CD8-positive, alpha-beta T cell (primary cell): ENCODE measurements at regions of chr3 and their contacts with region 1.

Region 1: DNA sequence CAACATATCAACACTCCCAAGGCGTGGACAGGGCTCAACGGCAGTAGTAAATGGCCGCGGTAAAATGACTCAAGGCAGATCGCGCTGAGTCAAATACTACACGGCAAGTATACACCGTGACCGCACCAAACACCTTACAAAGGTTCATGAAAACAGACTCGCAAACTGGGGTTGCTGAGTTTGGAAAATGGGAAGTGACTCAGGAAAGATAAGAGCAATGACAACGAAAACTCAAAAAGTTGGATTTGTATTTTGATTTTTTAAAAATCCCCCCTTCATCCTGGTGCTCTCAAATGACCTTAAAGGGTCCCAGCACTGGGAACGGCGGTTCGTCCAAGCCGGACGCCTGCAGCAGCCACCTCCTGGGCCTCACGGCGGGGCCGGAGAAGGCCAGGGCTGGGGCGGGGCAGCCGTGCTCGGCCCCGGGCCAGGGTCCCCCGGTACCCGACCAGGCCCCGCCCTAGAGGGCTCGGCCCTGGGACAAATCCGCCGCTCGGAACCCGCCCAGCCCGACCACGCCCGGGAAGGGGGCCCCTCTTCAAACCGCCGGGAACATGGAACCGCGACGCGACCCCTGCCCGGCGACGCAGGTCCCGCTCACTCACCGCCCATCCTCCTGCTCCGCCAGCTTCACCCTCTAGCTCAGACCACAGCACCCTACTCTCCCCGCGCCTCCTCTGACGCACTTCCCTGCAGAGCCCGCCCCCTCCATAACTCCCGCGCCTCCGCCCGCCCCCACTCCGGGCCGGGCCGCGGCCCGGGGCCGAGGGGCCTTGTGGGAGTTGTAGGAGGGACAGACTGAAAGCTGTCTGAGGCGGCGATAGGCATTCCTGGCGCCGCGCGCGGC is at the start of gene CLDND1:
- DNase-seq: peak; percentile 90 to 97 (median 95)
- ATAC-seq: peak; percentile 96
- H3K4me3 ChIP-seq: peak within 1 kb of the TSS; percentile 66 to 71
- H3K4me3 Mint-ChIP-seq: peak within 1 kb of the TSS; percentile 95
- H3K27ac ChIP-seq: peak within 1 kb of the TSS; percentile 82 to 86
- H3K27ac Mint-ChIP-seq: peak within 1 kb of the TSS; percentile 97
- H3K4me1 ChIP-seq: peaks cover 25% of the 10 kb centered on the region
- H3K4me1 Mint-ChIP-seq: peaks cover 54% of the 10 kb centered on the region
- H3K27me3 ChIP-seq: no peaks in the 10 kb centered on the region
- H3K27me3 Mint-ChIP-seq: no peaks in the 10 kb centered on the region
- CTCF ChIP-seq: no peak
- total RNA-seq, gene CLDND1: 135 to 146 TPM

Region 2: DNA sequence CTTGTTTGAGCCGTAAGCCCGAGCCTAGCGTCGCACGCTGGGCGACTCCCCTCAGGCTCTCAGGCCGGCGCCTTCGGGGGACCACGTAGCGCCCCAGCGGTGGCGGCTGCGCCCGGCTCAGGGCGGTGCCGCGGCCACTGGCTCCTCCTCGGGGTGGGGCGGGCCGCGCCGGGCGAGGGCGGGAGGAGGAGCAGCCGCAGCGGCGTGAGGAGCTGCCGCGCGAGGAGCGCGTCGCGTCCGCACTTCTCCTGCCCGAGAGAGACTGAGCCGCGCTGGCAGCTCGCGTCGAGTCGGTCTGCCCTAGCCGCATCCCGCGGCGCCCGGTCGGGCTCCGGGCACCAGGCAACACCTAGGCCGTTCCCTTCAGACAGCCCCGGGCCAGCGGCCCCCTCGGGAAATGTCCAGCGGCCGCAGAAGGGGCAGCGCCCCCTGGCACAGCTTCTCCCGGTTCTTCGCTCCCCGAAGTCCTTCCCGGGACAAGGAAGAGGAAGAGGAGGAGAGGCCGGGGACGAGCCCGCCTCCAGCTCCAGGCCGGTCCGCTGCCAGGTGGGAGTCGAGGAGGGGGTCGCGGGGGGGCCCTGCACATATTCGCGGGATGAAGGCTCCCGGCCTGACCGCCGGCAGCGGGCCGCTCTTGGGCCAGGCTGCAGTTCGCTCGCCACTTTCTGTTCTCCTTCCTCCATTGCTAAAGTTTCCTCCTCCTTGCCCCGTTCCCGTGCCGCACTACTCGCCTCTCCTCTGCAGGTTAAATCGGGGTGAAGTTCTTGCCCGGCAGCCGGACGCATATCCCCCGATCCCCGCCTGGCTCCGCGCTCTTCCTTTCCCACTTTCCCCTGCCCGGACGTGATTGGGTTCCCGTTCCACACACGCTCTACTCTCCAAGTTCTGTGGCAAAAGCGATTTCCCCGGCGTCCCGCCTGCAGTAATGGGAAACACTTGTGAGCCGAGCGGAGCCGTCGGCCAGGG is 700.4 kb before region 1 on chr3 and contains the start of gene CRYBG3:
- CTCF ChIA-PET with region 1: no interaction called
- POLR2A ChIA-PET with region 1: no interaction called
- intact Hi-C with region 1: loop called in 1 of 2 experiments (anchors 2 kb)
- DNase-seq: peak; percentile 63 to 90 (median 78)
- ATAC-seq: peak; percentile 98
- H3K4me3 ChIP-seq: peak within 1 kb of the TSS; percentile 61 to 75
- H3K4me3 Mint-ChIP-seq: peak within 1 kb of the TSS; percentile 95
- H3K27ac ChIP-seq: peak within 1 kb of the TSS; percentile 11 to 28
- H3K27ac Mint-ChIP-seq: peak within 1 kb of the TSS; percentile 81
- H3K4me1 ChIP-seq: peaks cover 11% of the 10 kb centered on the region
- H3K4me1 Mint-ChIP-seq: peaks cover 21% of the 10 kb centered on the region
- H3K27me3 ChIP-seq: no peaks in the 10 kb centered on the region
- H3K27me3 Mint-ChIP-seq: peaks cover 13% of the 10 kb centered on the region
- CTCF ChIP-seq: no peak
- total RNA-seq, gene CRYBG3: 1.00 to 1.1 TPM

Region 3: GRCh38 chr3:98039322-98040024 is 483.0 kb before region 1 on chr3:
- CTCF ChIA-PET with region 1: no interaction called
- POLR2A ChIA-PET with region 1: no interaction called
- intact Hi-C with region 1: loop called (anchors 5 kb)
- DNase-seq: peak; percentile 27 to 89 (median 66)
- ATAC-seq: peak; percentile 96
- H3K4me3 ChIP-seq: peak overlapping the region; percentile 37 to 38
- H3K4me3 Mint-ChIP-seq: peak overlapping the region; percentile 81
- H3K27ac ChIP-seq: peak overlapping the region; percentile 33 to 57
- H3K27ac Mint-ChIP-seq: peak overlapping the region; percentile 92
- H3K4me1 ChIP-seq: no peaks in the 10 kb centered on the region
- H3K4me1 Mint-ChIP-seq: peaks cover 7% of the 10 kb centered on the region
- H3K27me3 ChIP-seq: no peaks in the 10 kb centered on the region
- H3K27me3 Mint-ChIP-seq: peaks cover 22% of the 10 kb centered on the region
- CTCF ChIP-seq: peak; percentile 100

Region 4: DNA sequence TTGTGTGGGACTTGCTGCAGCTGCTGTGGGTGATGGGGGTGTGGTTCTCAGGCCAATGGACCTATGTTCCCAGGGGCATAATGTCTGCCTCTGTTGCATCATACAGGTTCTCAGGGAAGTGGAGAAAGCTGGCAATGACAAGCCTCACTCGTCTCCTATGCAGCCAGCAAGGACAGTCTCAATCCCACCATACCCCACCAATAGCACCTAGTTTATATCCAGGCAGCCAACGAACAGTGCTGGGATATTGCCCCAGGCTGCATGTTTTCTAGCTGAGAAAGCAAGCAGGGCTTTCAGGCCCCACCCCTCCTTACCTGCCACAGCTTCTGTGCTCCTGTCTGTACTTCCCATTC is 39.4 kb before region 1 on chr3:
- CTCF ChIA-PET with region 1: no interaction called
- POLR2A ChIA-PET with region 1: no interaction called
- intact Hi-C with region 1: no loop called
- DNase-seq: no peak
- ATAC-seq: no peak
- H3K4me3 ChIP-seq: no peak overlapping the region
- H3K4me3 Mint-ChIP-seq: no peak overlapping the region
- H3K27ac ChIP-seq: no peak overlapping the region
- H3K27ac Mint-ChIP-seq: no peak overlapping the region
- H3K4me1 ChIP-seq: no peaks in the 10 kb centered on the region
- H3K4me1 Mint-ChIP-seq: no peaks in the 10 kb centered on the region
- H3K27me3 ChIP-seq: no peaks in the 10 kb centered on the region
- H3K27me3 Mint-ChIP-seq: peaks cover 14% of the 10 kb centered on the region
- CTCF ChIP-seq: no peak

Region 5: GRCh38 chr3:98563661-98564281 is 41.3 kb after region 1 on chr3:
- CTCF ChIA-PET with region 1: interaction called, 4 read pairs
- POLR2A ChIA-PET with region 1: interaction called, 46 read pairs
- intact Hi-C with region 1: loop called in 1 of 2 experiments (anchors 1 kb)
- DNase-seq: peak in 3 of 9 experiments; percentile 42 to 88 (median 77)
- ATAC-seq: peak; percentile 51
- H3K4me3 ChIP-seq: no peak overlapping the region
- H3K4me3 Mint-ChIP-seq: peak overlapping the region; percentile 68
- H3K27ac ChIP-seq: peak overlapping the region; percentile 46 to 86
- H3K27ac Mint-ChIP-seq: peak overlapping the region; percentile 94
- H3K4me1 ChIP-seq: peaks cover 63% of the 10 kb centered on the region
- H3K4me1 Mint-ChIP-seq: peaks cover 73% of the 10 kb centered on the region
- H3K27me3 ChIP-seq: no peaks in the 10 kb centered on the region
- H3K27me3 Mint-ChIP-seq: no peaks in the 10 kb centered on the region
- CTCF ChIP-seq: no peak

Region 6: DNA sequence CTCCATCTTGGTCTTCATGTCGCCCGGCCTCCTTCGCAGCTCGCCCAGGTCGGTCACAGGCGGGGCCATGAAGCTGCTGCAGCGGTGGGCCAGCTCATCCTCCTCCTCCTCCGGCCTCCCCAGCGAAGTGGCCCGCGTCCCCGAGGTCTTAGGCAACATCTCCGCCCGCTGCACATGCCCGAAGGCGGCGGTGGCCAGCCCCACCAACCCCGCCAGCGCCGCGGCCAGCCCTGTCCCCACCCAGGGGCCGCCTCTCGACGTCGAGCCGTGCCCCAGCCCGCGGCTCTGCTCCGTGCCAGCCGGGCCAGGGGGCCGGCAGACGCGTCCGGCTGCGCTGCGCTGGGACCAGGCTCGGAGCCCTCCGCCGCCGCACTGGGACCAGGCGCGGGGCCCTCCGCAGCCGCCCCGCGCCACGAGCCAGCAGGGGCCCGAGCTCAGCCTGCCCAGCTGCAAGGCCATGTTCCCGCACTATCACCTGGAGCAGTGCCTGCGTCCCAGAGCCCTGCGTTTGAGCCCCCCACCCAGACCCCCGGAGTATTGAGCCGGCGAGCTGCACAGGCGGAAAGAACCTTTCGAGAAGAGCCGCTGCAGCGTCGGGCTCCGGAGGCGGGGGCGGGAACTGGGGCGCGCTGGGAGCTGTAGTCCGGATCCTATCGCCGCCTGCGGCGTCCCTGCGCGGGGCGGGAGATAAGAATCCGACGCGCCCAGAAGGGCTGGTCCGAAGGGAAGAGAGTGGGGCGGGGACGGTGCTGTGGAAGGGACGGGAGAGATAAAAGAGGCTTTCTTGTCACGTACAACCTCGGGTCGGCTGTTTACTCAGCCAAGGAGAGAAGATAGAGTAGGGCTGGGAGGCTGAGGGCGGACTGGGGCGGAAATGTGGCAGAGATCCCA is 70.8 kb after region 1 on chr3 and contains the start of gene CPOX:
- CTCF ChIA-PET with region 1: interaction called, 6 read pairs
- POLR2A ChIA-PET with region 1: interaction called, 11 read pairs
- intact Hi-C with region 1: loop called (anchors 1 kb)
- DNase-seq: peak; percentile 54 to 87 (median 80)
- ATAC-seq: peak; percentile 96
- H3K4me3 ChIP-seq: peak within 1 kb of the TSS; percentile 70 to 92
- H3K4me3 Mint-ChIP-seq: peak within 1 kb of the TSS; percentile 99
- H3K27ac ChIP-seq: peak within 1 kb of the TSS; percentile 61 to 74
- H3K27ac Mint-ChIP-seq: peak within 1 kb of the TSS; percentile 95
- H3K4me1 ChIP-seq: peaks cover 15% of the 10 kb centered on the region
- H3K4me1 Mint-ChIP-seq: peaks cover 35% of the 10 kb centered on the region
- H3K27me3 ChIP-seq: no peaks in the 10 kb centered on the region
- H3K27me3 Mint-ChIP-seq: no peaks in the 10 kb centered on the region
- CTCF ChIP-seq: no peak
- total RNA-seq, gene CPOX: 7.5 to 7.7 TPM

Region 7: DNA sequence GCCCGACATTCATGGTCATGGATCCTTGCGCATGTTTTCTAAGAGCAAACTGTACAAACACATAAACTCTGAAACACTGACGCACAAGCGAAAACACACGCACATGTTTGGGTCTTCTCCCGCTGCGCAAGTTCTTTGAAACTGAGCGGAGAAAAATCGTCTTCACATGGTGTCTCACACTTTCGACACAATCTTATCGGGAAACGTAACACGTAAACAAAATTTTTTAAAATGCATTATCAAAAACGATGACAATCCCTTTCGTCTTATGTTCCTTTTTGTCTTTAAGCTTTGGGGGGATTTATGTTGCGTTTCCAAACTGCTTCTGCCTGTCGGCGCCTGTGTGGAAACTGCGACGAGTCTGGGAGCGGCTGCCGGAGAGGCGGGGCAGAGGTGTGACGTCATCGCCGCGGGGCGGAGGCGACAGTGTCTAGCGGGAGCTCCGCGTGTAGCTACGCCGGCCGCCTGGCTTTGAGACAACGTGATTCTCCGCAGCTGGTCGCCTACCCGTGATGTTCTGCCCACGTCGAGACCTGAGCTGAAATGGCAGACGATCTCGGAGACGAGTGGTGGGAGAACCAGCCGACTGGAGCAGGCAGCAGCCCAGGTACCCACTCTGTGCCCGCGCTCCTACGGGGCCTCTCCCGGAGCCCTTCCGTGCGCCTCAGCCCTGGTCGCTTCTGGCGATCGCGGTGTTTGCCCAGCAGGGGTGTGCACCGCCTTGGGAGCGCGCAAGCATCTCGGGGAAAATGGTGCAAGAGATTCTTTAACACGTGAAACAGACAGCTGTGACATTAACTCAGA is 1295.2 kb after region 1 on chr3 and contains the start of gene CMSS1:
- CTCF ChIA-PET with region 1: no interaction called
- POLR2A ChIA-PET with region 1: no interaction called
- intact Hi-C with region 1: loop called (anchors 5 kb)
- DNase-seq: peak; percentile 89 to 99 (median 96)
- ATAC-seq: peak; percentile 84
- H3K4me3 ChIP-seq: peak within 1 kb of the TSS; percentile 55 to 79
- H3K4me3 Mint-ChIP-seq: peak within 1 kb of the TSS; percentile 96
- H3K27ac ChIP-seq: peak within 1 kb of the TSS; percentile 90 to 95
- H3K27ac Mint-ChIP-seq: peak within 1 kb of the TSS; percentile 100
- H3K4me1 ChIP-seq: peaks cover 20% of the 10 kb centered on the region
- H3K4me1 Mint-ChIP-seq: peaks cover 41% of the 10 kb centered on the region
- H3K27me3 ChIP-seq: no peaks in the 10 kb centered on the region
- H3K27me3 Mint-ChIP-seq: no peaks in the 10 kb centered on the region
- CTCF ChIP-seq: no peak
- total RNA-seq, gene CMSS1: 9.0 to 13.7 TPM

Region 8: GRCh38 chr3:100400780-100401673 is 1878.6 kb after region 1 on chr3 and contains the starts of genes LNP1 and TOMM70:
- CTCF ChIA-PET with region 1: no interaction called
- POLR2A ChIA-PET with region 1: no interaction called
- intact Hi-C with region 1: loop called in 1 of 2 experiments (anchors 2 kb)
- DNase-seq: peak; percentile 85 to 97 (median 94)
- ATAC-seq: peak; percentile 85
- H3K4me3 ChIP-seq: peak within 1 kb of the TSS; percentile 76 to 92
- H3K4me3 Mint-ChIP-seq: peak within 1 kb of the TSS; percentile 98
- H3K27ac ChIP-seq: peak within 1 kb of the TSS; percentile 77 to 92
- H3K27ac Mint-ChIP-seq: peak within 1 kb of the TSS; percentile 99
- H3K4me1 ChIP-seq: peaks cover 46% of the 10 kb centered on the region
- H3K4me1 Mint-ChIP-seq: peaks cover 73% of the 10 kb centered on the region
- H3K27me3 ChIP-seq: no peaks in the 10 kb centered on the region
- H3K27me3 Mint-ChIP-seq: no peaks in the 10 kb centered on the region
- CTCF ChIP-seq: no peak
- total RNA-seq, gene LNP1: 1.1 to 1.2 TPM
- total RNA-seq, gene TOMM70: 27.7 to 30.5 TPM